ENCODE measurements at regions of chr4 and their contacts with region 1.

Region 1: GRCh38 chr4:55444827-55445226 is 49.1 kb downstream of the TMEM165 start:
- DNase-seq: peak in 1 of 2 experiments; percentile 26
- H3K4me3 ChIP-seq: no peak overlapping the region
- H3K4me3 Mint-ChIP-seq: no peak overlapping the region
- H3K27ac Mint-ChIP-seq: no peak overlapping the region
- H3K4me1 ChIP-seq: no peaks in the 10 kb centered on the region
- H3K4me1 Mint-ChIP-seq: no peaks in the 10 kb centered on the region
- H3K27me3 ChIP-seq: no peaks in the 10 kb centered on the region
- H3K27me3 Mint-ChIP-seq: no peaks in the 10 kb centered on the region
- CTCF ChIP-seq: peak in 1 of 2 experiments; percentile 53

Region 2: GRCh38 chr4:55312489-55313101 is 132.2 kb before region 1 on chr4:
- CTCF ChIA-PET with region 1: no interaction called
- POLR2A ChIA-PET with region 1: no interaction called
- intact Hi-C with region 1: no loop called
- DNase-seq: peak; percentile 29 to 35
- H3K4me3 ChIP-seq: no peak overlapping the region
- H3K4me3 Mint-ChIP-seq: no peak overlapping the region
- H3K27ac Mint-ChIP-seq: no peak overlapping the region
- H3K4me1 ChIP-seq: no peaks in the 10 kb centered on the region
- H3K4me1 Mint-ChIP-seq: no peaks in the 10 kb centered on the region
- H3K27me3 ChIP-seq: no peaks in the 10 kb centered on the region
- H3K27me3 Mint-ChIP-seq: peaks cover 5% of the 10 kb centered on the region
- CTCF ChIP-seq: peak; percentile 38 to 65

Region 3: GRCh38 chr4:55635741-55636655 is 191.2 kb after region 1 on chr4 and contains the start of gene NMU:
- CTCF ChIA-PET with region 1: no interaction called
- POLR2A ChIA-PET with region 1: no interaction called
- intact Hi-C with region 1: loop called (anchors 5 kb)
- DNase-seq: peak; percentile 45 to 60
- H3K4me3 ChIP-seq: peak within 1 kb of the TSS; percentile 33
- H3K4me3 Mint-ChIP-seq: peak within 1 kb of the TSS; percentile 76
- H3K27ac Mint-ChIP-seq: no peak within 1 kb of the TSS
- H3K4me1 ChIP-seq: no peaks in the 10 kb centered on the region
- H3K4me1 Mint-ChIP-seq: peaks cover 7% of the 10 kb centered on the region
- H3K27me3 ChIP-seq: peaks cover 3% of the 10 kb centered on the region
- H3K27me3 Mint-ChIP-seq: peaks cover 24% of the 10 kb centered on the region
- CTCF ChIP-seq: peak in 1 of 2 experiments; percentile 16
- total RNA-seq, gene NMU: not detected in 2 replicates

Measured in Caco-2 (cell line).